ENCODE measurements at regions of chr6 and their contacts with region 1.

Region 1: GRCh38 chr6:30821862-30822782 is 62.2 kb upstream of the DDR1 start:
- DNase-seq: peak; percentile 50
- H3K4me3 Mint-ChIP-seq: no peak overlapping the region
- H3K27ac Mint-ChIP-seq: peak overlapping the region; percentile 43
- H3K4me1 Mint-ChIP-seq: peaks cover 65% of the 10 kb centered on the region
- H3K27me3 Mint-ChIP-seq: no peaks in the 10 kb centered on the region
- CTCF ChIP-seq: peak; percentile 71

Region 2: DNA sequence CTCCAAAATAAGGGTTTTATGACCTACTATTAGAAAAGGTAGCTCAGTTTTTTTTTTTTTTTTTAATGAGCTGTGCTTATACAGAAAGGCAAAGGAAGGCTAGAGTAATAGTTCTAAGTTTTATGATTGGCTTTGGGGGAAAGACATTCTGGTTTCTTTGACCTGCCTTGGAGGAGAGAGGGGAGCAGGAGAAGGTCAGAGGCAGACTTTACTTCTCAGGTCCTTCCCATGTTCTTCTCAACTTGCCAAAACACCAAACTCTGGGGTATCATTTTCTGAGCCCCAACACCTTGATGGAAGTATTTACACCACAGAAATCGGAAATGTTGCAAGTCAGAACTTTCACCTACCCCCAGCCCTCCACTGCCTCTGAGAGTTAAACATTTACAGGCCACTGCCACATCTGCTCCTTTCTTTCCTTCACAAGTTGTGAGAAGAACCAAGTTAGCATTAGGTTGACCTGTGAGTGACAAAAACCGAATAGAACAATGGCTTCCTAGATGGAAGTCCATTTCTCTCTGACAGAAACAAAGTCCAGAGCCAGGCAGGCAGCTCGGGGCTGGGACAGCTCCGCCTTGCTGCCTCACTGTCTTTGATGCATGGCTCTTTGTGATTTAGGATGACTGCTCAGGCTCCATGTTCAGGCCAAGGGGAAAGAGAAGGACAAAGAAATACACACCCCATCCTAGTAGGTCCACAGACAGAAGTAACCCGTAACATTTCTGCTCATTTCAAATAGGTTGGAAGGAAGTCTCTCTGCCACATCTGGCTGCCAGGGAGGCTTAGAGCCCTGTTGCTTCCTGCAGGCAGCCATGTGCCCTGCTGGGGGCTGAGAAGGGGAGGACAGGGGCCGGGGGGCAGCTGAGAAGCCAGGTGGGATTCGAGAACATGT is 58.6 kb before region 1 on chr6:
- CTCF ChIA-PET with region 1: interaction called, 31 read pairs
- intact Hi-C with region 1: no loop called
- DNase-seq: peak; percentile 77
- H3K4me3 Mint-ChIP-seq: peak overlapping the region; percentile 27
- H3K27ac Mint-ChIP-seq: peak overlapping the region; percentile 88
- H3K4me1 Mint-ChIP-seq: peaks cover 55% of the 10 kb centered on the region
- H3K27me3 Mint-ChIP-seq: no peaks in the 10 kb centered on the region
- CTCF ChIP-seq: no peak

Region 3: DNA sequence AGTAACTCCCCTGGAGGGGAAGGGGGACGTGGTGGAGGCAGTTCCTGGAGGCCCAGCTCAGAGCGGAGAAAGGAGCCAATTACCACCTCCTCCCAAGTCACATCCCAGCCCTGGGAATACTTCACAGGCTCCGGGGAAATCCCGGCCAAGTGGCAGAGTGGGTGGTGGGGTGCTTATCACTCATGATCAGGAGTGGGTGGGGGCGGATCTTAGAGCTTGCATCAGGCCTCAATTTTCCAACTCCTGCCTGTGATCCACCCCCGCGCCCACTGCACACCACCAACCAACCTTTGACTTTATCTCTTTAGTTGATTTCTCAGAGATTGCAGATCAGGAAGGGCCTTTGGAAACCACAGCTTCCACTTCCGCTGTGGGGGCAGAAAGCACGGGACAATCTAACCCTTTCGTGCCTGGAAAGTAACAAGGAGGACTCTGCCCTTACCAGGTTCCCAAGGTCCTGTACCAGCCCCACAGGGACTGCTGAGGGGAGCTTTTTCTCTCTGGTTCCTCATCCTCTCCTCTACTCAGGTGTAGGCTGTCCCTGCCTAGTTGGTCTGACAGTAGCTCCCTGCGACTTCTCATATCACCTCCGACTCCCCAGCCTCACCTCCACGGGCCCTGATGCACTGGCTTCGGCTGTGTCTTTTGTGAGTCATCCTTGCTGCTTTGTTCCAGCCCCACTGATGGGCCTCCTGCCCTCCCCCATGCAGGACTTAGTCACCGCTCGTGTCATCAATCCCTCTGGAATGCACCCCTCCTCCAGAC is 52.9 kb before region 1 on chr6:
- CTCF ChIA-PET with region 1: interaction called, 31 read pairs
- intact Hi-C with region 1: no loop called
- DNase-seq: peak; percentile 93
- H3K4me3 Mint-ChIP-seq: peak overlapping the region; percentile 53
- H3K27ac Mint-ChIP-seq: peak overlapping the region; percentile 93
- H3K4me1 Mint-ChIP-seq: peaks cover 69% of the 10 kb centered on the region
- H3K27me3 Mint-ChIP-seq: no peaks in the 10 kb centered on the region
- CTCF ChIP-seq: no peak

Region 4: DNA sequence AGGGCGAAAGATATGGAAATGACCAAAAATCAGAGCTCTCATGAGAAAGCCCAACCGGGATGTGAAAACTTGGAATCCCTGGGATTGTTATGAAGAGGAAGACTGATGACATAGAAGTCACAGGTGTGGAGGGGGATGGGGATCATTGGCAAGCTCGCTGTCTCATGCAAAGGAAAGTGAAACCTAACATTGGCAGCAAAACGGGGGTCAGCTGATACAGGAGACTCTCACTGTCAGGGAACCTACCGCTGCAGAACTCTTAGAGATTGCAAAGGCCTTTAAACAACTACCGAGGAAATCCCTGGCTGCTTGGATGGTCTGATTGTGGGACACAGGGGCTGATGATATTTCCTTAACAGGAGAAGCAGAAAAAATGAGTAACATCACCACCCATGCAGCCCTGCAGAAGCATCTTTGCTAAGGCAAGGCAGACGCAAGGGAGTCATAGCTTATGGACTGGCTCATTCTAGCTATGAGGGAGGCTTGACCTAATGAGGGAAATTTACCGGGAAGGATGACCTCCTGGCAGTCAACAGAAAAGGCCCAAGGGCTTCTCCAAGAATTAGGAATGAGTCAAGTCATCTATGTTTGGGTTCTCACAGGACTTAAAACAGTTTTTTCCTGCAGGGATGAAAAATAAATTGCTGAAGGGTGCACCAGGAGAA is 168.4 kb after region 1 on chr6:
- CTCF ChIA-PET with region 1: no interaction called
- intact Hi-C with region 1: no loop called
- DNase-seq: no peak
- H3K4me3 Mint-ChIP-seq: no peak overlapping the region
- H3K27ac Mint-ChIP-seq: no peak overlapping the region
- H3K4me1 Mint-ChIP-seq: no peaks in the 10 kb centered on the region
- H3K27me3 Mint-ChIP-seq: no peaks in the 10 kb centered on the region
- CTCF ChIP-seq: no peak